ENCODE measurements at regions of chr4 and their contacts with region 1.

Region 1: DNA sequence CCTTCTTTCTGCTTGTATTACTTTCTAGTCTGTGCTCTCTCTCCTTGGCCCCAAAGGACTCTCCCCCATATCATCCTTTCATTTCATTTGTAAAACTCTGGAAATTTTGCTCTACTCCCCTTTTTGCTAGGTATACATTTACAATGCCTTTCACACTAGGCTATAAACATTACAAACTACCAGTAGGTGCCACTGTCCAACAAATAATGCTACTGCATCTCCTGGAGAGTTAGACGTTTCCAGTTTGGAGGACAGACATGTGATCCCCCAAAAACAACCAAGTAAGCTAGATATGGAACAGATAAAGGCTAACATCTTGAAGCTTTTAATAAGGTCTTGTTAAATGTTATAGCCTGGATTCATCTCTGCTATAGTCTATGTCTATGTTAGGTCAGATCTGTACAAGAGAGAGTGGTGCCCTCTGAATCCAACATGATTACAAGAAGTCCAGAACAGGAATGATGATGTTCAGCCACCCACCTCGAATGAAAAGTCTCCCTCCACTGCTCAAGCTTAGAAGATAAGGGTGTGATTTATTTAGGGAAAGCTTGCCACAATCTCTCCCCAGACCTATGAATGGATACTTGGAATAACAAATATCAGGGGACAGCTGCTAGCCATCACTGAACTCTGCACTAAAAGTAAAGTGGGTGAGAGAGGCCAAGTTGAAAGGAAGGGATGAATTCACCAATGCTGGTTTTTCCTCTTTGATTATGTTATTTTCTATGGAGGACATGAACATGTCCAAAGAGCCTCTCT is 14.3 kb downstream of the CBR4 start:
- DNase-seq: no peak
- ATAC-seq: peak; percentile 67

Region 2: GRCh38 chr4:168931182-168931650 is 64.5 kb before region 1 on chr4:
- intact Hi-C with region 1: loop called (anchors 5 kb)
- DNase-seq: no peak
- ATAC-seq: peak; percentile 53

Region 3: DNA sequence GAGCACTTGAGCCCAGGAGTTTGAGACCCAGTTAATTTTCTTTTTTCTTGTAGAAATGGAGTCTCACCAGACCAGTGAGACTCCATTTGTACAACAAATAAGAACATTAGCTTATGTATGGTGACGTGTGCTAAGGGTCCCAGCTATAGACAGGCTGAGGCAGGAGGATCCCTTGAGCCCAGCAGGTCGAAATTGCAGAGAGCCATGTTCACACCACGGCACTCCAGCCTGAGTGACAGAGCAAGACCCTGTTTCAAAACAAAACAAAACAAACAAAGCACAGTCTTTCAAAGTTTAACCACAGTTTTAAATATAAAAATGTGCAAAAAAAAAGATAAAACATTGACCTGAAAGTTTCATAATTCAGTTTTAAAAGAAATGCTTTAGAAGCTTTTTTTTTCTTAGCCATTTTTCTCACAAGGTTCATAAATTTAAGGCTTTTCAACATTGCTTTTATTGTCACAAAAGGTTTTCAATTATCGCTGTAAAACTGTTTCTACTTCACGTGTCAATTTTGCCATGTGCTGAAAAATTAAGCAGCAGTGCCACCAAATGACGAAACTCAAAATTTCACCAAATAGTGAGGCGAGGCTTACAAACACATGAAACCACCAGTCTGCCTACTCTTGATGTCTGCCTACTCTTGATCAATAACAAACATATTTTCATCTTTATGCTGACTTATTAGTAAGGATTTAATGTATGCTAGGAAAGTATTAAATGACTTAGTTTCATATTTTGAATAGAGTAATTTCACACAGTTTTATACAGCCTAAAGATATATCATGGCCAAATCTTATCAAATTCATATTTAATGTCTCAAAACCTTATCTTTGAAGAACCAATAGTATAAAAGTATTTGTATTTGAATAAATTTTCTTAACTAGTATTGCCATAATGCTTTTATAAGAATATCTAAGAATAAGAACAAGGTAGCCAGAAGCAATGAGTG is 490.4 kb after region 1 on chr4:
- intact Hi-C with region 1: loop called (anchors 5 kb)
- DNase-seq: no peak
- ATAC-seq: no peak

Region 4: DNA sequence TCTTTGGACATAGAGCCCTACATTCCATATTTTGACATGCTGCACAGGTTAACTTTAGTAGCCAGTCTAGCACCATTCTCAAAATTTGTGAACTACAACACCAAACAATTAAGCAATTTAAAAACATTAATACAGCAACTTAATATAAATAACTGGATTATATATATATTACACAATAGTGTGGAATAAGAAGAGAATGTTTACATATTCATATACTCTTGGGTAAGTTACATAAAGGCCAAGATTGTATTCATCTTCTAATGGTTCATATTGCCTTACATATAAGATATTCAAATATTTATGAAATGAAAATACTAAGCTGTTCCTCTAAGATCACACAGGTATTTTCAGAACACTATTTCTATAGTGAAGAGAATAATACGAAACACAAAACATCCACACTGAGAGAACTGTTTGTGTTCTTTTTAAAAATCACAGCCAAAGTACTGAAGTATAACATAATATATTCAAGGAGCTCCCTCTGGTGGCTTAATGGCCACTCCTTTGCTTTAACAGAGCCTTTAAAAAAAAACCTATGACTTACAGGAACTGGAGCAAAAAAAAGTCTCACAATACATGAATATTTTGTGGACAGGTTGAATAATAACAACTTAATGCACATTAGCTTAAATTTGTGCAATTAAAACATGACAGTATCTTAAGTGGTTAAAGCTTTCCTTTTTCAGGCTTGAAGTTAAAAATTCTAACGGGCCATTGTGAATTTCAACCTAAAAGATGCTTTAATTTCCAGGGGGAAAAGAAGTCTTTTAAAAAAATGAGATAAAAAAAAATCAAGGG is 570.5 kb after region 1 on chr4:
- intact Hi-C with region 1: loop called (anchors 10 kb)
- DNase-seq: no peak
- ATAC-seq: peak; percentile 54

Measured in Right ventricle myocardium inferior (tissue), 1 donor.